ENCODE measurements at regions of chr17 and their contacts with region 1.

Region 1: GRCh38 chr17:20226814-20227482 is 217.8 kb downstream of the SPECC1 start:
- DNase-seq: peak; percentile 53
- H3K4me3 ChIP-seq: no peak overlapping the region
- H3K27ac ChIP-seq: no peak overlapping the region
- H3K4me1 ChIP-seq: peaks cover 36% of the 10 kb centered on the region
- H3K27me3 ChIP-seq: no peaks in the 10 kb centered on the region
- CTCF ChIP-seq: peak; percentile 86 to 89

Region 2: DNA sequence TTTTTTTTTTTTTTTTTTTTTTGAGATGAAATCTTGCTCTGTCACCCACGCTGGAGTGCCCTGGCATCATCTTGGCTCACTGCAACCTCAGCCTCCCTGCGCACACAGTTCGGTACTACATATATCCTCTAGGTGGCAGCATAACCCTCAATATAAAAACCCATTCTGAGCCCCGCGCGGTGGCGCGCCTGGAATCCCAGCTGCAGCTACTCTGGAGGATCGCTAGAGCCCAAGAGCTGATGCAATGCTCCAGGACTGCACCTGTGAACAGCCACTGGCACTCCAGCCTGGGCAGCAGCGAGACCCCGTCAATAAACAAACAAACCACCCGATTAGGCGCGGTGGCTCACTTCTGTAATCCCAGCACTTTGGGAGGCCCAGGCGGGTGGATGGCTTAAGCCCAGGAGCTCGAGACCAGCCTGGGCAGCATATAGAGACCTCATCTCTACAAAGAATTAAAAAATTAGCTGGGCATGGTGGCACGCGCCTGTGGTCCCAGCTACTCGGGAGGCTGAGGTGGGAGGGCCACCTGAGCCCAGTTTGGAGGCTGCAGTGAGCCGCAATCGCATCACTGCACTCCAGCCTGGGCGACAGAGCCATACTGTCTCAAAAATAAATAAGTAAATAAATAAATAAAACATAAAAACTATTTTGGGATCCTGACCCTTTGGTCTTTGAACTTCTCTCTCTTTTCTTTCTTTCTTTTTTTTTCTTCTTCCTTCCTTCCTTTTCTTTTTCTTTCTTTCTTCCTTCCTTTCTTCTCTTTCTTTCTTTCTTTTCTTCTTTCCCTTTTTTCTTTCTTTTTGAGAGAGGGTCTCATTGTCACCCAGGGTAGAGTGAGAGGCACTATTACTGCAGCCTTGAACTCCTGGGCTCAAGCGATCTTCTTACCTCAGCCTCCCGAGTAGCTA is 233.9 kb before region 1 on chr17:
- CTCF ChIA-PET with region 1: interaction called, 3 read pairs
- dilution Hi-C with region 1: no loop called
- in situ Hi-C with region 1: loop called in 1 of 2 experiments (anchors 10 kb)
- intact Hi-C with region 1: loop called (anchors 2 kb)
- DNase-seq: peak; percentile 76
- H3K4me3 ChIP-seq: no peak overlapping the region
- H3K27ac ChIP-seq: no peak overlapping the region
- H3K4me1 ChIP-seq: no peaks in the 10 kb centered on the region
- H3K27me3 ChIP-seq: no peaks in the 10 kb centered on the region
- CTCF ChIP-seq: peak; percentile 57 to 75

Region 3: DNA sequence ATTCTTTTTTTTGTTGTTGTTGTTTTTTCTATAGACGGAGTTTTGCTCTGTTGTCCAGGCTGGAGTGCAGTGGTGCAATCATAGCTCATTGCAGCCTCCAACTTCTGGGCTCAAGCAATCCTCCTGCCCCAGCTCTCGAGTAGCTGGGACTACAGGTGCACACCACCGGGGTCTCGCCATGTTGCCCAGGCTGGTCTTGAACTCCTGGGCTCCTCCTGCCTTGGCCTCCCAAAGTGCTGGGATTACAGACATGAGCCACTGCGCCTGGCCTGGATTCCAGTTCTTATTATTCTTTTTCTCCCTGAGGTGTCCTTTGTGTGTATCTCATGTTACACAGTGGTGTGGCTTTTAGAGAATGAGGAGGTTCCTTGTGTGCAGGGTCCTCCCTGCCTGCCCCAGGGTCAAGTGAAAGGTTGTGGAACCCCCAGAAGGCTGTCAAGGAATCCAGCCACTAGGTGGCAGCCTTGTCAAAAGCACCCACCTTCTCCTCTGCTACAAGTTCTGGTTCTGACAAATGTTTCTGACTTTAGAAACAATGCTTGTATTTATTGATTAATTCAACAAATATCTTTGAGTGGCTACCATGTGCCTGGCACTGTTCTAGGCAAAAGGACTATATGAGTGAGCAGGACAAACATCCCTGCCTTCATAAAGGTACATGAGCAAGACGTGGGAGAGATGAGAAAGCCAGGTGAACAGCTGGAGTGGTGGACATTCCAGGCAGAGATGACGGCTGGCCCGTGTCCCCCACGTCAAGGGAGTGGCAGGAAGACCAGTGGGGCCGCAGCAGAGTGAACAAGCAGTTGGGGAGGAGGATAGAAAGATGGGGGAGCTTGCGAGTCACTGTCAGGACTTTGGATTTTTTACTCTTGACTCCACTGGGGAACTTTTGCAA is 105.3 kb before region 1 on chr17:
- CTCF ChIA-PET with region 1: no interaction called
- dilution Hi-C with region 1: no loop called
- in situ Hi-C with region 1: loop called in 1 of 2 experiments (anchors 5 kb)
- intact Hi-C with region 1: loop called (anchors 1 kb)
- DNase-seq: peak; percentile 34
- H3K4me3 ChIP-seq: no peak overlapping the region
- H3K27ac ChIP-seq: no peak overlapping the region
- H3K4me1 ChIP-seq: peaks cover 5% of the 10 kb centered on the region
- H3K27me3 ChIP-seq: no peaks in the 10 kb centered on the region
- CTCF ChIP-seq: peak; percentile 81 to 94

Region 4: GRCh38 chr17:20155258-20156195 is 71.4 kb before region 1 on chr17:
- CTCF ChIA-PET with region 1: interaction called, 3 read pairs
- dilution Hi-C with region 1: no loop called
- in situ Hi-C with region 1: loop called in 1 of 2 experiments (anchors 10 kb)
- intact Hi-C with region 1: loop called (anchors 2 kb)
- DNase-seq: peak; percentile 99
- H3K4me3 ChIP-seq: peak overlapping the region; percentile 70 to 74 (median 73)
- H3K27ac ChIP-seq: peak overlapping the region; percentile 31
- H3K4me1 ChIP-seq: peaks cover 4% of the 10 kb centered on the region
- H3K27me3 ChIP-seq: no peaks in the 10 kb centered on the region
- CTCF ChIP-seq: no peak

Region 5: GRCh38 chr17:20315821-20316220 is 88.9 kb after region 1 on chr17:
- CTCF ChIA-PET with region 1: no interaction called
- dilution Hi-C with region 1: no loop called
- in situ Hi-C with region 1: loop called (anchors 10 to 25 kb)
- intact Hi-C with region 1: loop called (anchors 1 kb)
- DNase-seq: no peak
- H3K4me3 ChIP-seq: no peak overlapping the region
- H3K27ac ChIP-seq: no peak overlapping the region
- H3K4me1 ChIP-seq: no peaks in the 10 kb centered on the region
- H3K27me3 ChIP-seq: no peaks in the 10 kb centered on the region
- CTCF ChIP-seq: no peak

Region 6: GRCh38 chr17:20852239-20852989 is 625.5 kb after region 1 on chr17:
- CTCF ChIA-PET with region 1: no interaction called
- dilution Hi-C with region 1: no loop called
- in situ Hi-C with region 1: no loop called
- intact Hi-C with region 1: loop called (anchors 5 kb)
- DNase-seq: peak; percentile 38
- H3K4me3 ChIP-seq: peak overlapping the region; percentile 11 to 37 (median 13)
- H3K27ac ChIP-seq: no peak overlapping the region
- H3K4me1 ChIP-seq: peaks cover 12% of the 10 kb centered on the region
- H3K27me3 ChIP-seq: peaks cover 8% of the 10 kb centered on the region
- CTCF ChIP-seq: no peak